ENCODE measurements at regions of chr6 and their contacts with region 1.

Region 1: GRCh38 chr6:152948150-152948768 is 34.6 kb downstream of the FBXO5 start:
- DNase-seq: no peak
- H3K4me3 ChIP-seq: no peak overlapping the region
- H3K27ac ChIP-seq: no peak overlapping the region
- H3K4me1 ChIP-seq: peaks cover 26% of the 10 kb centered on the region
- H3K27me3 ChIP-seq: no peaks in the 10 kb centered on the region
- CTCF ChIP-seq: peak; percentile 82

Region 2: DNA sequence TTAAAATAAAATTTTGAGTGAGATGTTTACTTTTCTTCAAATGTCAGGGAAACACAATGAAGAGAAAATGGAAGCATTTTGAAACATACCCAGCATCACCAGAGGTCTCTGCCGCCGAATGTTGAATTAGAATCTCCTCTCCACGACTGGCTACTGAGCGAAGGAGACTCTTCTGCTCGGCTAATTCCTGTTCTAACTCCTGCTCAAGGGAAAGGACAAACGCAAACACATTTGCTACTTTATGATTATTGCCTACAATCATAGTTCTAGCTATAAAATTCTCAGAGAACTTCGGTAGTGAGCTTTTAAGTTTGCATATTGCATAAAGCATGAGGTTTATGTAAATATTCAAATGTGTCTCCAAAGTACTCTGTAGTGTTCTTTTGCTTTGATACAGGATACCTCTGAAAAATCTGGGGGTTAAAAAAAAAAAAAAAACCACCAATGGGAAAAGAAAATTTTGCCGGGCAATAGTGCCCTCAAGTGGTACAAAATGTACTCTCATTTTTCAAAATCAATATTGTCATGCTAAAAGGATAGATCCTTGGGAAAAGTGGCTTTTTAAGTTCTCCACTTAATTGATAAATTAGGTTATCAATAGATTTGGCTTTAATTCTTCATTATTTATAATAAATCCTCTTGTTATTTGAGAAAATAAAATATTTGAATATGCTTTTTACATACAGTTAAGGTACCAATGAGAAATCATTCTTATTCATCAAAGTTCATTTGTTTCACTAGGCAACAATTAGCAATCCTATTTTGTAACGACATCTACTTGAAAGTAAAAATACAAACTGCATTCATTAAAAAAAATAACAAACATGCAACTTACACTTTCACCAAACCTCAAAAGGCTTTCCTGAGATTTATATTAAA is 680.1 kb before region 1 on chr6:
- CTCF ChIA-PET with region 1: no interaction called
- POLR2A ChIA-PET with region 1: no interaction called
- intact Hi-C with region 1: loop called (anchors 10 kb)
- DNase-seq: peak in 1 of 2 experiments; percentile 12
- H3K4me3 ChIP-seq: no peak overlapping the region
- H3K27ac ChIP-seq: no peak overlapping the region
- H3K4me1 ChIP-seq: peaks cover 29% of the 10 kb centered on the region
- H3K27me3 ChIP-seq: no peaks in the 10 kb centered on the region
- CTCF ChIP-seq: peak; percentile 81

Region 3: GRCh38 chr6:152552616-152553209 is 395.5 kb before region 1 on chr6:
- CTCF ChIA-PET with region 1: no interaction called
- POLR2A ChIA-PET with region 1: no interaction called
- intact Hi-C with region 1: loop called (anchors 5 kb)
- DNase-seq: peak; percentile 38
- H3K4me3 ChIP-seq: no peak overlapping the region
- H3K27ac ChIP-seq: no peak overlapping the region
- H3K4me1 ChIP-seq: no peaks in the 10 kb centered on the region
- H3K27me3 ChIP-seq: no peaks in the 10 kb centered on the region
- CTCF ChIP-seq: peak; percentile 80

Region 4: DNA sequence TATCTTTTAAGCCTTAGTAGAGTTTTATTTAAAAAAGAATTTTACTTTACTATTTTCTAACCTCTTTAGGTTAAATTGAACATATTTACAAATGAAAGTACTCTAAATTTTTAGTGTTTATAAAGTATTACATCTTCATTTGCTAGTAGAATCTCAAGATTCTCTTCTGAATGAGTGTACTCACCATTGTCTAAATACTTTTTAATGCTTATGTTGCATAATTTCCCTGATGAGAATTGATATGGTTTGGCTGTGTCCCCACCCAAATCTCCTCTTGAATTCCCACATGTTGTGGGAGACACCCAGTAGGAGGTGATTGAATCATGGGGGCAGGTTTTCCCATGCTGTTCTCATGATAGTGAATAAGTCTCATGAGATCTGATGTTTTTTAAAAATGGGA is 144.1 kb before region 1 on chr6:
- CTCF ChIA-PET with region 1: no interaction called
- POLR2A ChIA-PET with region 1: no interaction called
- intact Hi-C with region 1: no loop called
- DNase-seq: no peak
- H3K4me3 ChIP-seq: no peak overlapping the region
- H3K27ac ChIP-seq: no peak overlapping the region
- H3K4me1 ChIP-seq: no peaks in the 10 kb centered on the region
- H3K27me3 ChIP-seq: no peaks in the 10 kb centered on the region
- CTCF ChIP-seq: no peak

Region 5: DNA sequence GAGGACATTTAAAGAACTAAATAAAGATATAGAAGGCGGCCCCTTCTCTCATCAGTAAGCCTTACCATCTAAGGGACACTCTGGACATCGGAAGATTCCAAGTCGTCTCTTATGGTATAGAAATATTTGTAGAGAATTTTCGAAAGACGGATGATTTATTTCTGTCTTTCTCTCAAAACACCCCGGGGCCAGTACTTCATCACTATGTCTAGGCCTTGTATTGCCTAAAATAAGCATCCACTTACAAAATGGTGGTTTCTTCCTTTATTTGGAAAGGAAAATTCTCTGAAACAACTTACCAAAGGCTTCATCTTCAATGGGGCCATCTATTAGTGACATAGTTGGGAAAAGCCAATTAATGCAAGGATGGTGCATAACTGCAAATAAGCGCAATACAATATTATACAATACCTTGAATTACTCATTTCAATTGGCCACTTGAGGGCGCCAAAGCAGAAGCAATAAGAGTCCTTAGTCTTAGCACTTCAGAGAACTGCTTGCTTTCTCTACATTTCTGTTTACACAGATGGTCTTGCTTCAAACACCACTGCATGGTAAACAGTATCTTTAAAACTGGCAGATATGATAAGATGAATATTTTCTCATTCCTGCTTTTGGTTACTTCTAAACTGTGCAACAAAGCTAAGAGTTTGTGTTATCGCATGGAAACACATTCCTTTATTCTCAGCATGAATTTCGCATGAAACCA is 84.5 kb before region 1 on chr6:
- CTCF ChIA-PET with region 1: interaction called, 7 read pairs
- POLR2A ChIA-PET with region 1: no interaction called
- intact Hi-C with region 1: loop called (anchors 1 kb)
- DNase-seq: peak in 1 of 2 experiments; percentile 29
- H3K4me3 ChIP-seq: no peak overlapping the region
- H3K27ac ChIP-seq: no peak overlapping the region
- H3K4me1 ChIP-seq: no peaks in the 10 kb centered on the region
- H3K27me3 ChIP-seq: no peaks in the 10 kb centered on the region
- CTCF ChIP-seq: peak; percentile 84

Region 6: GRCh38 chr6:153002607-153003365 is 54.5 kb after region 1 on chr6 and contains the start of gene MTRF1L:
- CTCF ChIA-PET with region 1: no interaction called
- POLR2A ChIA-PET with region 1: no interaction called
- intact Hi-C with region 1: no loop called
- DNase-seq: peak; percentile 86 to 92
- H3K4me3 ChIP-seq: peak within 1 kb of the TSS; percentile 96
- H3K27ac ChIP-seq: peak within 1 kb of the TSS; percentile 79
- H3K4me1 ChIP-seq: peaks cover 33% of the 10 kb centered on the region
- H3K27me3 ChIP-seq: no peaks in the 10 kb centered on the region
- CTCF ChIP-seq: no peak
- total RNA-seq, gene MTRF1L: 5.7 and 8.0 TPM in 2 replicates

Region 7: DNA sequence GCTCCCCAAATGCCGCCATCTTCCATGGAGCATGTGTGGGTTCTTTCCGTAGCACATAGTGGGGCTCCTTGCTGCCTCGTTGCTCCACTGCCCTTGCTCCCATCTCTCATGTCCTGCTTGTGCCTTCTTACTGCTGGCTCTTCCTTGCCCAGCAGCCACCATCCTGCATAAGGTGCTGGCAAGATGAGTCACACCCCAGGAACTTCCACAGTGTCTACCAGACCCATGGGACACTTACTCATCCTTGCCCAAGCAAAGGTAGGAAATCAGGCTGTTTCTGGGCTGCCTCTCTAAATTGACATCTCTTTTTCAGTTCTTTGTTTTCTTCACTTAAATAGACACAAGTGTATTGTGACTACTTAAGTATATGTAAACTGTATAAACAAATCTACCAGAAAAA is 222.3 kb after region 1 on chr6:
- CTCF ChIA-PET with region 1: no interaction called
- POLR2A ChIA-PET with region 1: no interaction called
- intact Hi-C with region 1: no loop called
- DNase-seq: peak; percentile 24 to 61
- H3K4me3 ChIP-seq: no peak overlapping the region
- H3K27ac ChIP-seq: no peak overlapping the region
- H3K4me1 ChIP-seq: peaks cover 36% of the 10 kb centered on the region
- H3K27me3 ChIP-seq: no peaks in the 10 kb centered on the region
- CTCF ChIP-seq: no peak

Region 8: GRCh38 chr6:153251326-153251725 is 303.1 kb after region 1 on chr6:
- CTCF ChIA-PET with region 1: no interaction called
- POLR2A ChIA-PET with region 1: no interaction called
- intact Hi-C with region 1: no loop called
- DNase-seq: no peak
- H3K4me3 ChIP-seq: no peak overlapping the region
- H3K27ac ChIP-seq: no peak overlapping the region
- H3K4me1 ChIP-seq: no peaks in the 10 kb centered on the region
- H3K27me3 ChIP-seq: no peaks in the 10 kb centered on the region
- CTCF ChIP-seq: no peak

Region 9: GRCh38 chr6:153553627-153554026 is 605.4 kb after region 1 on chr6:
- CTCF ChIA-PET with region 1: interaction called, 13 read pairs
- POLR2A ChIA-PET with region 1: no interaction called
- intact Hi-C with region 1: no loop called
- DNase-seq: no peak
- H3K4me3 ChIP-seq: no peak overlapping the region
- H3K27ac ChIP-seq: no peak overlapping the region
- H3K4me1 ChIP-seq: no peaks in the 10 kb centered on the region
- H3K27me3 ChIP-seq: no peaks in the 10 kb centered on the region
- CTCF ChIP-seq: peak; percentile 31; the same call in 1 of the 2 replicates